ENCODE measurements at regions of chr10 and their contacts with region 1.

Region 1: GRCh38 chr10:80509403-80510161 is 28.1 kb upstream of the SH2D4B start:
- DNase-seq: no peak
- H3K4me3 ChIP-seq: no peak overlapping the region
- H3K27ac ChIP-seq: no peak overlapping the region
- H3K4me1 ChIP-seq: peaks cover 0 to 13% (median 3%) of the 10 kb centered on the region in 4 experiments
- H3K27me3 ChIP-seq: no peaks in the 10 kb centered on the region

Region 2: GRCh38 chr10:80131499-80131901 is 378.1 kb before region 1 on chr10:
- CTCF ChIA-PET with region 1: no interaction called
- POLR2A ChIA-PET with region 1: no interaction called
- DNase-seq: no peak
- H3K4me3 ChIP-seq: no peak overlapping the region
- H3K27ac ChIP-seq: no peak overlapping the region
- H3K4me1 ChIP-seq: peaks cover 0 to 10% (median 7%) of the 10 kb centered on the region in 4 experiments
- H3K27me3 ChIP-seq: peaks cover 3 to 34% (median 11%) of the 10 kb centered on the region in 5 experiments

Region 3: DNA sequence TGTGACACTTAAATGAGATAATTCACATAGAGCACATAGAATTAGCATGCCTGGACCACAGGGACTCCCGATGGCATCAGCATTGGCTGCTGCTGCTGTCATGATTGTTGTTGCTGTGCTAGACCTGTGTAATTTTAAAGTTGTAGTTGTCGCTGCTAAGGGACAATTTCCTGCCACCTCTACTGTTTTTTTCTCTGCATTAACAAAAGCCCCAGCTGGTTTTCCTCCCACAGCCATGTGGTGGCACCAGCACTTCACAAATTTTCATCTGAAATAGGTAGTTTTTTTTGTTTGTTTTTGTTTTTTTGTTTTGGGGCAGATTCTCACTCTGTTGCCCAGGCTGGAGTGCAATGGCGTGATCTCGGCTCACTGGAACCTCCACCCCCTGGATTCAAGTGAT is 126.6 kb before region 1 on chr10:
- CTCF ChIA-PET with region 1: interaction called, 33 read pairs
- POLR2A ChIA-PET with region 1: no interaction called
- DNase-seq: peak; percentile 70 to 86 (median 85)
- H3K4me3 ChIP-seq: peak overlapping the region in 3 of 7 experiments; percentile 19 to 33 (median 20)
- H3K27ac ChIP-seq: no peak overlapping the region
- H3K4me1 ChIP-seq: peaks cover 0 to 12% (median 6%) of the 10 kb centered on the region in 4 experiments
- H3K27me3 ChIP-seq: no peaks in the 10 kb centered on the region

Region 4: DNA sequence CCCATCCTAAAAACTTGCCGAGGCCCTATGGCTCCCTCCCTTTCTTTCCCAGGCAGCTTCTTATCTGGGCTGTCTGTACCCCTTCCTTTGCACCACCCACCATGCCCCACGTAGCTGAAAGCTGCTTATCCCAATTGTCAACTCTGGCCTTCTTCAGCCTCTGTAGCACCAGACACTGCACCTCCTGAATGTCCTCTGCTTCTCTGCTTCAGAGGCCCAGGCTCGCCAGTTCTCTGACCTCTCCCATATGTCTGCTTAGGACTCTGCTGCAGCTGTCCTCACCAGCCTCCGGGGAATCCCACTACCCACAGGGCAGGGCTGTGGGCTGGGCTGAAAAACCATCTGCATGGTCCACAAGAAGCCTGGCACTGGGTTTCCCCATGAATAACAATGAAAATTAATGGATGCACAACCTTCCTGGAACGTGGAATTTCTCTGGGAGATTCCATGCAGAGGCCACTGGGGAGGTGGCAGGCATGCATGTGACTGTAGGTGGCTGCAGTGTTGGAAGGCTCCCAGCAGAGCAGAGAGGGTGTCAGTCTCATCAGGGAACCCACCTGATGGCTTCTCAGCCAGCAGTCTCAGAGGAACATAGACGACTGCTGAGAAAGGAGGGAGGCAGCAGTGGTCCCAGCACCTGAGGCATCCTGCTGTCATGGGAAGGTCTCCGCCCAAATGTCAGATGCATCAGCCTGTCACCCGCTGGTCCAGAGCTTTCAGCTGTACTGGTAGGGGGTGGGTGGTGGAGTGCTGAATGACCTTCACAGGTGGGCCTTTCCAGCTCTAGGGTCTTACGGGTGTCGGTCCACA is 11.3 kb after region 1 on chr10:
- CTCF ChIA-PET with region 1: interaction called, 28 read pairs
- POLR2A ChIA-PET with region 1: no interaction called
- DNase-seq: no peak
- H3K4me3 ChIP-seq: no peak overlapping the region
- H3K27ac ChIP-seq: no peak overlapping the region
- H3K4me1 ChIP-seq: peaks cover 0 to 21% (median 0%) of the 10 kb centered on the region in 4 experiments
- H3K27me3 ChIP-seq: no peaks in the 10 kb centered on the region